Activated CD8-positive, alpha-beta T cell treated with anti-CD3 and anti-CD28 coated beads for 36 hours (primary cell): ENCODE measurements at regions of chr10 and their contacts with region 1.

Region 1: GRCh38 chr10:88810196-88810961 is 7.8 kb downstream of the LIPM start:
- DNase-seq: peak; percentile 53
- ATAC-seq: peak; percentile 87
- H3K4me3 Mint-ChIP-seq: no peak overlapping the region
- H3K27ac Mint-ChIP-seq: no peak overlapping the region
- H3K4me1 Mint-ChIP-seq: peaks cover 17% of the 10 kb centered on the region
- H3K27me3 Mint-ChIP-seq: no peaks in the 10 kb centered on the region
- CTCF ChIP-seq: peak; percentile 78

Region 2: GRCh38 chr10:88565072-88565471 is 245.3 kb before region 1 on chr10:
- CTCF ChIA-PET with region 1: interaction called, 5 read pairs
- POLR2A ChIA-PET with region 1: no interaction called
- intact Hi-C with region 1: loop called (anchors 10 kb)
- DNase-seq: no peak
- ATAC-seq: no peak
- H3K4me3 Mint-ChIP-seq: no peak overlapping the region
- H3K27ac Mint-ChIP-seq: no peak overlapping the region
- H3K4me1 Mint-ChIP-seq: peaks cover 3% of the 10 kb centered on the region
- H3K27me3 Mint-ChIP-seq: no peaks in the 10 kb centered on the region
- CTCF ChIP-seq: peak; percentile 53

Region 3: GRCh38 chr10:88657901-88658300 is 152.5 kb before region 1 on chr10:
- CTCF ChIA-PET with region 1: no interaction called
- POLR2A ChIA-PET with region 1: no interaction called
- intact Hi-C with region 1: no loop called
- DNase-seq: no peak
- ATAC-seq: no peak
- H3K4me3 Mint-ChIP-seq: no peak overlapping the region
- H3K27ac Mint-ChIP-seq: no peak overlapping the region
- H3K4me1 Mint-ChIP-seq: no peaks in the 10 kb centered on the region
- H3K27me3 Mint-ChIP-seq: peaks cover 7% of the 10 kb centered on the region
- CTCF ChIP-seq: no peak

Region 4: DNA sequence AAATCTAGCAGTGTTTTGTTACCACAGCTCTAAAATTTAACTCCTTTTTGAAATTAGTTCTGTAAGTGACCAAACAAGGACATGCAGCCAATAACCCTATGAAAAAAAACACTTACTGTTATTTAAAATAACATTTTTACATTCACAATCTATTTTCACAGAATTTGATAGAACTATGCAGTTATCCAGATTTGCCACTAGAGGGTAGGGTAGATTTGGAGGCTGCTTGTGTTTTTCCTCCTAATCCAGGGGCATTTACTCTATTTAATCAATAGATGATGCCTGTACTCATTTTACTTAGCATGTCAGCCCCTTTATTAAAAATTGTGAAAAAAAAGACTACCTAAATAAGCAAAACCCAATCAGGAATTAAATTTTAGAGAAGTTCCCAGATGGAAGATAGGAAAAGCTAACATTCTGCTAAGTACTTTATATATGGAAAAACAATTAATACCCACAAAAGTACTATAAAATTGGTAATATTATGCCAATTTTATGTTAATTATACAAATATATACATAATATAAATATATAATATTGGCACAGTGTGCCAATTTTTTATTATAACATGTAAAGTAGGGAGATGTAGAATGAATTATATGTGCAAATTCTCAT is 122.4 kb before region 1 on chr10:
- CTCF ChIA-PET with region 1: interaction called, 30 read pairs
- POLR2A ChIA-PET with region 1: no interaction called
- intact Hi-C with region 1: loop called (anchors 2 kb)
- DNase-seq: no peak
- ATAC-seq: peak; percentile 56
- H3K4me3 Mint-ChIP-seq: no peak overlapping the region
- H3K27ac Mint-ChIP-seq: no peak overlapping the region
- H3K4me1 Mint-ChIP-seq: no peaks in the 10 kb centered on the region
- H3K27me3 Mint-ChIP-seq: peaks cover 3% of the 10 kb centered on the region
- CTCF ChIP-seq: peak; percentile 98

Region 5: GRCh38 chr10:88707429-88708285 is 102.7 kb before region 1 on chr10:
- CTCF ChIA-PET with region 1: interaction called, 11 read pairs
- POLR2A ChIA-PET with region 1: no interaction called
- intact Hi-C with region 1: no loop called
- DNase-seq: peak; percentile 39
- ATAC-seq: peak; percentile 69
- H3K4me3 Mint-ChIP-seq: no peak overlapping the region
- H3K27ac Mint-ChIP-seq: no peak overlapping the region
- H3K4me1 Mint-ChIP-seq: peaks cover 29% of the 10 kb centered on the region
- H3K27me3 Mint-ChIP-seq: peaks cover 4% of the 10 kb centered on the region
- CTCF ChIP-seq: no peak

Region 6: DNA sequence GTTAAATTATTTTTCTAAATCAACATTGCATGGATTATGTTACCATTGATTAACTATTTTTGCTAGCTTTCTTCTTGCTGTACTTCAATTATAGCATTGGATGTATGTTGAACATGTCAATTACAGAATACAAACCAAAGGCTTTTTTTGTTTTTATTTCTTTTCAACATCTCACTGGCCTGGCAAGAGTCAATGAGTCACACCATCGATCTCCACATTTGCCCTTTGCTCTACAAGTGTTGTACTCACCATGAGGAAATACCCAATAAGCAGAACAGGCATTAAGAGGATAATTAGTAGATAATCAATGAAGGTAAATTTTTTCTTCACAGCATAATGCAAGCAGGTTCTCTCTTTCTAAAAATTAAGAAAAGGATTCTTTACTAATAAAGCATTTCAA is 17.9 kb after region 1 on chr10:
- CTCF ChIA-PET with region 1: interaction called, 10 read pairs
- POLR2A ChIA-PET with region 1: no interaction called
- intact Hi-C with region 1: no loop called
- DNase-seq: peak; percentile 20
- ATAC-seq: no peak
- H3K4me3 Mint-ChIP-seq: no peak overlapping the region
- H3K27ac Mint-ChIP-seq: no peak overlapping the region
- H3K4me1 Mint-ChIP-seq: peaks cover 62% of the 10 kb centered on the region
- H3K27me3 Mint-ChIP-seq: no peaks in the 10 kb centered on the region
- CTCF ChIP-seq: no peak